ENCODE measurements at regions of chr20 and their contacts with region 1.

Region 1: DNA sequence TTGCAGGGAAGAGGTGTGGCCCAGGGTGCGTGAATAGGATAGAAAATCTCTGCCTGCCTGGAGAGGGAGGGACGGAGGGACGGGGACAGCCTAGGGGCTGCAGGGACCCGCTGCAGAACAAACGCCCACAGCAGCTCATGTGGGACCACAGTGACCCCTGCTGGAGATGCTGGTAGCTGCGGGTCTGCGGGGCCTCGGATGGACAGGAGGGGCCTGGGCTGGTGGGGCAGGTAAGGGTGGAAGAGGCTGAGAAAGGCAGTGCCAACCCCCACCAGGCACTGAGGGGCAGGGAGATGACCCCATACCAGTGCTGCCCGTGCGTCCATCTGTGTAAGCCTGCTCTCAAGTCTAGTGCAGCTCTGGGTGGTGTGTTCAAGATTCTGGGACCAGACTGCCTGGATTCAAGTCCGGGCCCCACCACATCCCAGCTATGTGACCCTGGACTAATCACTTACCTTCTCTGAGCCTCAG is 39.4 kb downstream of the KIAA1755 start:
- DNase-seq: no peak
- H3K4me3 ChIP-seq: peak overlapping the region; percentile 36
- CTCF ChIP-seq: peak; percentile 97

Region 2: DNA sequence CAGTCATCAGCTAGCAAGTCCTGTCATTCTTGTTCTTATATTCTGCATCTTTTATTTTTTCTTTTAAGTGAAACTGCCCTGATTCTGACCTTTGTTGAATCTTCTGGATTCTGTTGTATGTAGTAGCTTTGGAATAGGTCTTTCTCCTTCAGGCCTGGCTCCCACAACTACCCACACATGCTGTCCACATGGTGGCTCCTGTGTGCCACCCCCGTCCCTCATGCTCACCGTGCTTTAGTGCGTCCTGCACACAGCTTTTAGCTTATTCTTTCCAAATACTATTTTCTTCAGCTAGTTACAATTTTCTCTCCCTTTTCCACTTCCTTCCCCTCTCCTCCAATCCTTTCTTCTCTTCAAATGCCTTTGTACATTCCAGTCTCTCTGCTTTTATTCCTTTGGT is 465.5 kb before region 1 on chr20:
- CTCF ChIA-PET with region 1: interaction called, 14 read pairs
- POLR2A ChIA-PET with region 1: no interaction called
- DNase-seq: no peak
- H3K4me3 ChIP-seq: no peak overlapping the region
- CTCF ChIP-seq: peak; percentile 57

Region 3: GRCh38 chr20:38017959-38018358 is 203.2 kb before region 1 on chr20:
- CTCF ChIA-PET with region 1: interaction called, 12 read pairs
- POLR2A ChIA-PET with region 1: no interaction called
- DNase-seq: no peak
- H3K4me3 ChIP-seq: no peak overlapping the region
- CTCF ChIP-seq: no peak

Region 4: DNA sequence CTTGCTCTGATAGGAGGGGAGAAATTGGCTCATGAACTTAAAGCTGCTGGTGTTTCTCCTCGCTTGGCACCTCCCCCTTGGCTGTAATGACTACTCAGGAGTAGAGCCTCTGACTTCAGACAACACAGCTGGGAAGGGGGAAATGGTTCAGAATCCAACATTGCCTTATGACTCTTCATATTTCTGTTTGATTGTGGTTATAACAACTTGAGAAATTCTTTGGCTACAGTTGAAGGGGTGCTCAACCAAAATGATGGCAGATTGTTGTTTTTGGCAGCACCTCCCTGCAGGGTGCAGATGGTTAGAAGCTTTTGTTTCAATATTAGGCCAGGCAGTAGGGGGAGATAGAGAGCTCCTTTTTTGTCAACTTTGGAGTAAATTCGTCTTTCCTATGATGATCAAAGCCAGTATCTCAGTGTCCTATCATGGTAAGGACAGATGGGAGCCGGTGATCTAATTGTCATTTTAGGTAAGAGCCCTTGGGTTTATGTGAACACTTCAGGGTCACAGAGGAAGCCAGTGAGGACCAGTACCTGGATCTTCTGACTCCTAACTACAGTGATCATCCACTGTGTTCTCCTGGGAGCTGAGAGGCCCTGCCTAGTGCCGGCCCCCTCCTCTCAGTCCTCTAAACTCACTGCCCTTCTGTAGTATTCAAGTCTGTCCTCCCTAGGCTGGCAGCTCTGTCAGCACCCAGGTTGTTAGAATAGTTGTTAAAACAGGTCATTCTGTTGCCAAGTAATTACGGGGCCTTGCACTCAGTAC is 147.7 kb before region 1 on chr20:
- CTCF ChIA-PET with region 1: interaction called, 1,143 read pairs
- POLR2A ChIA-PET with region 1: interaction called, 8 read pairs
- DNase-seq: peak; percentile 93
- H3K4me3 ChIP-seq: no peak overlapping the region
- CTCF ChIP-seq: peak; percentile 57

Region 5: GRCh38 chr20:38165089-38165989 is 55.8 kb before region 1 on chr20 and contains the start of gene TGM2:
- CTCF ChIA-PET with region 1: interaction called, 140 read pairs
- POLR2A ChIA-PET with region 1: interaction called, 4 read pairs
- DNase-seq: no peak
- H3K4me3 ChIP-seq: peak within 1 kb of the TSS; percentile 49
- CTCF ChIP-seq: peak; percentile 84

Region 6: GRCh38 chr20:38252292-38253288 is 31.4 kb after region 1 on chr20:
- CTCF ChIA-PET with region 1: interaction called, 16 read pairs
- POLR2A ChIA-PET with region 1: no interaction called
- DNase-seq: no peak
- H3K4me3 ChIP-seq: no peak overlapping the region
- CTCF ChIP-seq: no peak

Region 7: DNA sequence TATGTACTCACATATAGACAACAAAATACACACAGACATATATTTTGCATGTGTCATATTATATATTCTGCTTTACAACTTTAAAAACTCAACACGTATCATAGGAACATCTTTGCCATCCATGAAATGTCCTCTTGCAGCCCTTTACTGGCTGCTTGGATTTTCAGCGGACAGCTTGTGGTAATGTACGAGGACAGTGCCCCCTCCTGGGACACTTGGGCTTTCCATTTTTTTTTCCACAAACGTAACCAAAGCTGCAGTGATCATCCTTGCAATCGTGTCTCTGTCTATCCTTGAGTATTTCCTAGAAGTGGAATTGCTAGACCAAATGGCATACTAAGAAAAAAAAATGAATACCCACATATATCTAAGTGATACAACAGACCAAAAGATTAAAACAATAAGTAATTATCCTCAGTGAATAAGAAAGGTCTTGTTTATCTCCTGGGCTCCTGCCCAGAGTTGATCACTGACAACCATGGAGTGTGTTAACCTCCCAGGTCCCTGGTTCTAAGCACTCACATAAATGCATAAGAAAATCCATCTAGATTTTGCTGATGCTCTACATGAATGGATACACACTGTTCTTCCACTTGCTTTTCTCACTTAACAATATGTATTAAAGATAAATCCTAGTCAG is 100.9 kb after region 1 on chr20:
- CTCF ChIA-PET with region 1: interaction called, 91 read pairs
- POLR2A ChIA-PET with region 1: no interaction called
- DNase-seq: no peak
- H3K4me3 ChIP-seq: no peak overlapping the region
- CTCF ChIP-seq: peak; percentile 58

Region 8: DNA sequence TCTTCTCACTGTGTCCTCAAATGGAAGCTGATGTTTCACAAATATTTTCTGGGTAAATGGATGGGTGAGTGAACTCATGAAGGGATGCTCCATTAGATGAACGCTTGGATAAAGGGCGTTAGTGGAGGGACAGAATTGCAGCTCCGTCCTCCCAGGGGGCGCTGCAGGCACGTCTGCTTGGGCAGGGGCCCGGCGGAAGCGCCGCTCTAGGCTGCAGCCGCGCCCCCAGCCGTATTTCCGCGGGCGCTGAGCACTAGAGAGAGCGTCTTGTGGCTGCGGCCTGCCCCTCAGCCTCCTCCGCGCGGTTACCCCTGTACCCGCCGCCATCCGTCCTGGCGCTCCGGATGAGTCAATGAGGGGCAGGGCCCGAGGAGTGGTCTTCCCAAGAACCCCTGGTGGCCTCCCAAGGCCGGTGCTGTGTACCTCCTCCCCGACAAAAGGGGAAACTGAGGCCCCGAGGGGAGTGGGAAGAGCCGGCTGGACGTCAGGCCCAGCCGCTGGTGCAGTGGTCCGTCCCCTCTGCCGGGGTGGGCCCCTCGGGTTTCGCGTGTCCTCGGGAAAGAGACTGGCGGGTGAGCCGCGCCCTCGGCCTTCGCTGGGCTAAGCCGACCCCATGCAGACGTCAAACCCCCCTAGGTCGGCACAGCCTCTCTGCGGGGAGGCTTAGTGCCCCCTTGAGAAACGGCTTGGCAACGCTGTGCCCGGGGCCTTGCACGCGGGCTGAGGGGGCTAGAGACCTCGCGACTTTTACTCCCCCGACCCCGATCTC is 225.5 kb after region 1 on chr20:
- CTCF ChIA-PET with region 1: no interaction called
- POLR2A ChIA-PET with region 1: no interaction called
- DNase-seq: peak; percentile 67
- H3K4me3 ChIP-seq: peak overlapping the region; percentile 83
- CTCF ChIP-seq: peak; percentile 97

Measured in AG04449 (cell line).